Endothelial cell of umbilical vein (primary cell): ENCODE measurements at regions of chr1 and their contacts with region 1.

Region 1: GRCh38 chr1:98260839-98261238 is 340.0 kb upstream of the DPYD start:
- DNase-seq: peak; percentile 12
- H3K4me3 ChIP-seq: no peak overlapping the region
- H3K27ac ChIP-seq: no peak overlapping the region
- H3K4me1 ChIP-seq: peaks cover 41% of the 10 kb centered on the region
- H3K27me3 ChIP-seq: no peaks in the 10 kb centered on the region
- CTCF ChIP-seq: peak in 1 of 2 donors; percentile 37
- POLR2A ChIP-seq: no peak

Region 2: DNA sequence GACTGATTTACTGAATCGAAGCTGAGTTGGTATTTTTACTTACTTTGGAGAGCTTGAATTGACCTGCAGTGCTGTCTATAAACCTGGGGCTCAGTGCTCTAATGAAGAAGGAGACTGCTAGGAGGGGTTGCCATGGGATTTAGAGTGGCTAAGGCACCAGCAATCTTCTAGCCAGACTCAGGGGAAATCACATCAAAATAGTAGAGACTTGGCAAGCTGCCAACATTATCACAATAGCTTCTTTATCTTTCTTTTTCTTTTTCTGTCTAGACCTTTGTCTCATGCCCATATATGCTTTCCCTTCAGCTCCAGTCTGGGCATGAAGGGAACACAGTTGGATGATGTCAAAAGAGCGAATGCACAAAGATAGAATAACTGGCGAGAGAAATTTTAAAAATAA is 38.9 kb before region 1 on chr1:
- CTCF ChIA-PET with region 1: no interaction called
- POLR2A ChIA-PET with region 1: no interaction called
- dilution Hi-C with region 1: no loop called
- intact Hi-C with region 1: loop called (anchors 2 kb)
- DNase-seq: peak; percentile 76
- H3K4me3 ChIP-seq: no peak overlapping the region
- H3K27ac ChIP-seq: no peak overlapping the region
- H3K4me1 ChIP-seq: peaks cover 18% of the 10 kb centered on the region
- H3K27me3 ChIP-seq: no peaks in the 10 kb centered on the region
- CTCF ChIP-seq: no peak
- POLR2A ChIP-seq: no peak

Region 3: DNA sequence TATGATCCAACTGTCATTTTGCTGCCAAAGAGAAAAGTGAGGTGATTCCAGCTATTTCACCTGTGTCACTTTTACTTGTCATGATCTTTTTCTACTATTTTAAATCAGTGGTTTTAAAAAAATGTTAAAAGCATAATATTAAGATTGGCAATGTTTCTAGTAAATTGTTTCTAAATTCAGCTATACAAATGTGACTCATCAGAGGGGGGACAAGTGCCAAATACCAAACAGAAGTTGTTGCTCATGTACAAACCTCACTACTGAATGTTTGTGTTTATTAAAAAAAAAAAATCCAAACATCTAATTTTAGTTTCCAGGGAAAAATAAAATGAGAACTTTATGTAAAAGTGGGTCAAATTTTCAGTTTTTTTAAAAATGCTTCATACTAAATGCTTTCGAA is 54.5 kb after region 1 on chr1:
- CTCF ChIA-PET with region 1: no interaction called
- POLR2A ChIA-PET with region 1: no interaction called
- dilution Hi-C with region 1: no loop called
- intact Hi-C with region 1: no loop called
- DNase-seq: peak; percentile 82
- H3K4me3 ChIP-seq: no peak overlapping the region
- H3K27ac ChIP-seq: peak overlapping the region; percentile 79
- H3K4me1 ChIP-seq: peaks cover 28% of the 10 kb centered on the region
- H3K27me3 ChIP-seq: no peaks in the 10 kb centered on the region
- CTCF ChIP-seq: no peak
- POLR2A ChIP-seq: no peak